ENCODE measurements at regions of chr11 and their contacts with region 1.

Region 1: DNA sequence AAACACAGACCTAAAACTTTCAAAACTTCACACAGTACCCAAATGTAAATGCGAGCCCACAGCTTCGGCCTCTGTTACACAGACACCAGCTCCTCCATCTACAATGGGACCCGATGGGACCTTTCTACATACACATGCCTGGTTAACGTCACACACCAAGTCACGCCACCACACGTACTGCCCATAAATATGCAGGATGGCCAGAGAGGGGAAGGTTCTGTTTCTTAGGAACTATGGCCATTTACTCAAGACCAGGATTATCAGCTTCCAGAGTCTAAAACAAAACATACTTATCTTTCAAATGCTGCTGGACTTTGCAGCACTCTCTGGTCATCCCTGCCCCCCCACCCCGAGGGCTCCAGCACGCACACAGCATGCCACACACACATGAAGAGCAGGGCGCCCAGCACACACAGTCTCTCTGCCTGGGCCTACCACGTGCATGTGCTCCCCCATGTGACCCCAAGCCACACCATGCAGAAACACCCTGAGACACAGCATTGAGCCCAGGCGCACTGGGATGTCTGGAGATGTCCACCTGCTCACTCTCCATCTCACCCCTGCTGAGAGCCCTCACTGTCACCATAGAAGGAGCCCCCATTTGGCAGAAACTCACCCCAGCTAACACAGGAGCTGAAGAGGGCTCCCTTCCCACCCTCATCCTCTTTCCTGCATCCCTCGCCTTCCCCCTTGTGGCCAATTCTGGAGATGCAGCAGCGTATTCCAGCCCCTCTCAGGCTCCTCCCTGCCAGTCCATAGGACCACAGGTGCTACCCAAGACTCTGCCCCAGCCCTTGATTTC is 61.8 kb downstream of the SLC22A12 start:
- DNase-seq: peak; percentile 55
- ATAC-seq: peak; percentile 97
- H3K4me3 ChIP-seq: no peak overlapping the region
- H3K27ac ChIP-seq: no peak overlapping the region
- H3K4me1 ChIP-seq: no peaks in the 10 kb centered on the region
- H3K27me3 ChIP-seq: peaks cover 41% of the 10 kb centered on the region
- CTCF ChIP-seq: peak; percentile 93
- POLR2A ChIP-seq: no peak
- RAD21 ChIP-seq: peak; percentile 86

Region 2: DNA sequence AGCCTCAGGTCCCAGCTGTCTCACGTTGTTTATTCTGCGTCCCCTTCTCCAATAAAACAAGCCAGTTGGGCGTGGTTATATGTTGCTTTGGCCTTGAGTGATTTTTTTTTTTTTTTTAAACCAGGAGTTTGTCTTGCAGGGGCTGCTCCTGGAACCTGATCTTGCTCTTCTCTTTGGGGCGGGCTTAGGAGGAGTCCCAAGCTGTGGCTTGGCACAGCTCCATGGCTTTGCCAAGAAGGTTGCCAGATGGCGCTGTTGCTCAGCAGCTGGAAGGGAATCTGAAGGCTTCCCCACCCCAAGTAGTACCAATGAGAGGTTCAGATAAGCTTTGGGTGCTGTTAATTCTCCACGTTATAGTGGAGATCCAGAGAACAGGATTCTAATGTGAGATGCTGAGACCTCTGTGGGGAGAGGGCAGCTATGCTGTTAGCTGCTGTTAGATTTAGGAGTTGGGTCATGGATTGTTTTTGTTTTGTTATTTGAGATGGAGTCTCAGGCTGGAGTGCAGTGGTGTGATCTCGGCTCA is 448.3 kb before region 1 on chr11:
- CTCF ChIA-PET with region 1: no interaction called
- POLR2A ChIA-PET with region 1: no interaction called
- dilution Hi-C with region 1: no loop called
- in situ Hi-C with region 1: no loop called
- intact Hi-C with region 1: loop called (anchors 10 kb)
- DNase-seq: peak; percentile 96
- ATAC-seq: peak; percentile 72
- H3K4me3 ChIP-seq: no peak overlapping the region
- H3K27ac ChIP-seq: no peak overlapping the region
- H3K4me1 ChIP-seq: peaks cover 10% of the 10 kb centered on the region
- H3K27me3 ChIP-seq: no peaks in the 10 kb centered on the region
- CTCF ChIP-seq: peak; percentile 96
- POLR2A ChIP-seq: no peak
- RAD21 ChIP-seq: peak; percentile 96

Region 3: GRCh38 chr11:64489831-64490441 is 162.9 kb before region 1 on chr11:
- CTCF ChIA-PET with region 1: no interaction called
- POLR2A ChIA-PET with region 1: no interaction called
- dilution Hi-C with region 1: no loop called
- in situ Hi-C with region 1: no loop called
- intact Hi-C with region 1: loop called (anchors 2 kb)
- DNase-seq: peak; percentile 7
- ATAC-seq: peak; percentile 68
- H3K4me3 ChIP-seq: no peak overlapping the region
- H3K27ac ChIP-seq: no peak overlapping the region
- H3K4me1 ChIP-seq: no peaks in the 10 kb centered on the region
- H3K27me3 ChIP-seq: peaks cover 42% of the 10 kb centered on the region
- CTCF ChIP-seq: peak; percentile 53
- POLR2A ChIP-seq: no peak
- RAD21 ChIP-seq: peak; percentile 65

Region 4: GRCh38 chr11:64553551-64554201 is 99.1 kb before region 1 on chr11:
- CTCF ChIA-PET with region 1: interaction called, 3 read pairs
- POLR2A ChIA-PET with region 1: no interaction called
- dilution Hi-C with region 1: no loop called
- in situ Hi-C with region 1: no loop called
- intact Hi-C with region 1: loop called (anchors 1 kb)
- DNase-seq: peak; percentile 22
- ATAC-seq: peak; percentile 89
- H3K4me3 ChIP-seq: no peak overlapping the region
- H3K27ac ChIP-seq: no peak overlapping the region
- H3K4me1 ChIP-seq: no peaks in the 10 kb centered on the region
- H3K27me3 ChIP-seq: peaks cover 13% of the 10 kb centered on the region
- CTCF ChIP-seq: peak; percentile 83
- POLR2A ChIP-seq: no peak
- RAD21 ChIP-seq: peak; percentile 79

Region 5: DNA sequence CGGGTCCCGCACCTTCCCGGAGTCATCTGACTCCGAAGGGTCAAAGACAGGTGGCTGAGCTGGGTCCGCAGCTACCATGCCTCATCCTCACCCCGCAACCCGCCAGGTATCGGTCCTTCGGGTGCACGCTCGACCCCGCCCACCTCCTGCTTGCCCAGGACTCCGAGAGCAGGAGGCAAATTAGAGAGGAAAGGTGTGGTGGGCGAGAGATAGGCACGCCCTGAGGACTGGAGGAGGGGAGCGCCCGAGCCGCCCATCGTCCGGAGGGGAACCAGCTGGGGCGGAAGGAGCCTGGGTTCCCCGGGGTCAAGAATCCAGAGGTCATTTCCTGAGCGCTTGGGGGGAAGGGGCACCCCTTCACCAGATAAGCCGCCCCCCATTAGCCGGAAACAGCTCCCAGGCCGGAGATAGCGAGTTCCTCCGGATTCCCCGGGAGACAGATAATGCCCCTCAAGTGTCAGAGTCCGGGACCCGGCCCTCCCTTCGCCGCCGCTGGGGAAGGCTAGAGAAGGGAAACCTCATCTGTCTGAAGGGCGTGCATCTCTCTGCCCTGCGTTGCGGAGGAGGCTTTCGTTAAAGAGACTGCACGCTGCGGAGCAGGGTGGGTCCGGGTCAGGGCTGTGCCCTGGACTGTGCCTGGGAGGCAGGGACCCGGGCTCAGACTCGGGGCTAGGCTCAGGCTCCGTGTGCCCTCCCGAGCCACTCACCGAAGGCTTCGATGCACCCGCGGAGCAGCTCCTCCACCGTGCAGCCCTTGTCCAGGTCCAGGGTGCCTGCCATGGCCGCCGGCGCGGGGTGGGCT is 89.5 kb after region 1 on chr11:
- CTCF ChIA-PET with region 1: no interaction called
- POLR2A ChIA-PET with region 1: no interaction called
- dilution Hi-C with region 1: no loop called
- in situ Hi-C with region 1: no loop called
- intact Hi-C with region 1: no loop called
- DNase-seq: no peak
- ATAC-seq: peak; percentile 30
- H3K4me3 ChIP-seq: peak overlapping the region; percentile 20
- H3K27ac ChIP-seq: no peak overlapping the region
- H3K4me1 ChIP-seq: peaks cover 11% of the 10 kb centered on the region
- H3K27me3 ChIP-seq: peaks cover 72% of the 10 kb centered on the region
- CTCF ChIP-seq: no peak
- POLR2A ChIP-seq: no peak
- RAD21 ChIP-seq: no peak

Measured in IMR-90 (cell line).